GM23248 (cell line): ENCODE measurements at regions of chr6 and their contacts with region 1.

Region 1: DNA sequence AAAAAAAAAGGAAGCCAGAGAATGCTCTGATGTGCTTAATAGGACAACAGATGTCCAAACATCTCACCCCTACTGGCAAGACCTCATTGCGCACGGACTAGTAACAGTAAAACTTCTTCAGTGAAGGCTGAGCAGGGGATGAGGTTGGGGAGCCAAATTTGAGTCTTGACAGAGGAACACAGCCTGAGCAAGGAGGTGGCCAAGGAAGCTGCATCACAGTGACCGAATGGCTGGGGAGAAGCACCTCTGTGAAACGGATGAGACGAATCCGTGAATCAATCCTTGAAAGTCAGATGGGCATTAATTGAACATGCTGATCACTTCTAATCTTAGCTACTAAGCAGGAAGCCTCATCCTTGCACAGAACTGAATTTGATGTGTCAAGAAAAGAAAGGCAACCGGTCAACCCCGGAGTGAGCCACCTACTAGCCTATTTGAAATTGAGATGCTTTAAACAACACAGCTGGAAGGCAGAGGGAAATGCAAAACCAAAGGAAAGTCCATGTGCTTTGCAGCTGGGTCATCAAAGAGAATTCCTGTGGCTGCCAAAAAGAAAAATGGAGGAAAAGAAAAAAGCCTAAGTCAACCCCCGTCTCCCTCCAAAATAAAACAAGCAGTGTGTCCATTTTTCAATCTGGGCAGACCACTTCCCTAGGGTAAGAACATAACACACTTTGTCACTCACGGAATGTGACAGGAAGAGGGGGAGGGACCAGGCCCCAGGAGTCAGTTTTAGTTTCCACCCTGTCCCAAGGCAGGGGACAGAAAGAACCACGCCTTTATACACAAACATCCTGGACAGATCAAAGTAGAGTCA is 29.5 kb downstream of the PXDC1 start:
- DNase-seq: peak; percentile 46
- H3K4me3 ChIP-seq: no peak overlapping the region
- H3K27ac ChIP-seq: peak overlapping the region; percentile 64
- H3K4me1 ChIP-seq: peaks cover 38% of the 10 kb centered on the region
- H3K27me3 ChIP-seq: no peaks in the 10 kb centered on the region

Region 2: GRCh38 chr6:3456755-3457466 is 265.1 kb before region 1 on chr6 and contains the start of gene SLC22A23:
- in situ Hi-C with region 1: loop called (anchors 25 kb)
- DNase-seq: peak; percentile 66
- H3K4me3 ChIP-seq: peak within 1 kb of the TSS; percentile 91
- H3K27ac ChIP-seq: no peak within 1 kb of the TSS
- H3K4me1 ChIP-seq: peaks cover 23% of the 10 kb centered on the region
- H3K27me3 ChIP-seq: no peaks in the 10 kb centered on the region
- total RNA-seq, gene SLC22A23: 7.3 and 9.5 TPM in 2 replicates

Region 3: GRCh38 chr6:3822747-3823450 is 100.9 kb after region 1 on chr6:
- in situ Hi-C with region 1: no loop called
- DNase-seq: peak; percentile 34
- H3K4me3 ChIP-seq: no peak overlapping the region
- H3K27ac ChIP-seq: no peak overlapping the region
- H3K4me1 ChIP-seq: peaks cover 25% of the 10 kb centered on the region
- H3K27me3 ChIP-seq: no peaks in the 10 kb centered on the region

Region 4: DNA sequence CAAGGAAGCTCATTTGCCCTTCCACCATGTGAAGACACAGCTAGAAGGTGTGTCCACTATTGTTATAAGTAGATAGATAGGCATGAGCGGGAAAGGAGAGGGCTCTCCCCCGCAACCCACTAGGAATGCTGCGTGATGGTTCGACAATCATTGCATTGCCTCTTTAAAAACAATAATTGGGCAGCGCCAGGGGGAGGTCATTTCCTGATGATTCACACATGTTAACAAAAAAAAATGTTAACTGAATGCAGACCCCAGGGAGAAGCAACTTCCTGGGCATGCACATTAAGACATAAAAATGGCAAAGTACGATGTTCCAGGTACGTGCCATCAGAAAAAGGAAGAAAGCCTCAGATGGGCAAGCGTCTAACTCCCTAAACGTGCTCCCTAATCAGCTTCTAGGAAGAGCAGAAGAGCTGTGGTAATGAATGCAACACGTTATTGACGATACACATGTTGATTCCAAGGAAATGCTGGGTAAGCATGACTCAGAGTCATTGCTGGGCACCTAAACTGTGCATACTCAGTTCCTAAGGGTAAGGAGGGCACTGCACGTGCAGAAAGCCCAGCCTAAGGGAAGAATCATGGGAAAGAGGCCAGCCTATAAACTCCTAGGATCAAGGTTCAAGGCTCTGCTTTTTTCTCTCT is 243.2 kb after region 1 on chr6:
- in situ Hi-C with region 1: no loop called
- DNase-seq: peak; percentile 44
- H3K4me3 ChIP-seq: no peak overlapping the region
- H3K27ac ChIP-seq: no peak overlapping the region
- H3K4me1 ChIP-seq: no peaks in the 10 kb centered on the region
- H3K27me3 ChIP-seq: no peaks in the 10 kb centered on the region

Region 5: DNA sequence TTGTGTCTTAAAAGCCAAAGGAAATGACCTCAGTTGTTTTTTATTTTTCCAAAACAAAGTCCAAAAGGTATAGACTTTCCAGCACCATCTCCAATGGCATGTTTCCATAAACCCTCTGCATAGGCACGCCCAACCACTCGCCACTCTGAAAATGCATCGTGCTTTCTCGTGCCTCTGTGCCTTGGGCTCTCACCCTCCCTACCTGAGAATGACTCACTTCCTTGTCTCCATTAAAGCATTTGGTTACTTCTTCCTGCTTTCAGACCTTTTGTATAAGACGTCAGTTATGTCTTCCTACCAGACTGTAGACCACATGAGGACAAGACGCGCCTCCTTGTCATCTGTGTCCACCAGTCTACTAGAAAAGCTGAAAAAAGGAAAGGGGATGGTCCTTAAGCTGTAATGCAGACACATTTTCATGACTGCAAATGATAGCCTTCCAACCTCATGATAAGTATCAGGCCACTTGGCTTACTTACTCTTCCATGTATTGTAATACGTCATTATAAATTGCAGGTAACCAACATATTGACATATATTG is 993.0 kb after region 1 on chr6:
- in situ Hi-C with region 1: no loop called
- DNase-seq: no peak
- H3K4me3 ChIP-seq: no peak overlapping the region
- H3K27ac ChIP-seq: no peak overlapping the region
- H3K4me1 ChIP-seq: no peaks in the 10 kb centered on the region
- H3K27me3 ChIP-seq: no peaks in the 10 kb centered on the region